Spleen (tissue), 13 donors: ENCODE measurements at regions of chr2 and their contacts with region 1.

Region 1: GRCh38 chr2:72859831-72860262 is 27.4 kb upstream of the SPR start:
- DNase-seq: no peak
- H3K4me3 ChIP-seq: no peak overlapping the region
- H3K27ac ChIP-seq: no peak overlapping the region
- H3K4me1 ChIP-seq: peaks cover 5 to 13% (median 9%) of the 10 kb centered on the region in 6 donors
- H3K27me3 ChIP-seq: peaks cover 0 to 64% (median 13%) of the 10 kb centered on the region in 7 donors
- CTCF ChIP-seq: peak; percentile 26 to 77 (median 68)
- POLR2A ChIP-seq: no peak

Region 2: GRCh38 chr2:72770879-72771461 is 88.9 kb before region 1 on chr2:
- intact Hi-C with region 1: loop called (anchors 2 kb)
- DNase-seq: no peak
- H3K4me3 ChIP-seq: no peak overlapping the region
- H3K27ac ChIP-seq: no peak overlapping the region
- H3K4me1 ChIP-seq: peaks cover 0 to 4% (median 0%) of the 10 kb centered on the region in 6 donors
- H3K27me3 ChIP-seq: no peaks in the 10 kb centered on the region
- CTCF ChIP-seq: peak; percentile 53 to 82 (median 77)
- POLR2A ChIP-seq: no peak